Endothelial cell of umbilical vein (primary cell): ENCODE measurements at regions of chr9 and their contacts with region 1.

Region 1: DNA sequence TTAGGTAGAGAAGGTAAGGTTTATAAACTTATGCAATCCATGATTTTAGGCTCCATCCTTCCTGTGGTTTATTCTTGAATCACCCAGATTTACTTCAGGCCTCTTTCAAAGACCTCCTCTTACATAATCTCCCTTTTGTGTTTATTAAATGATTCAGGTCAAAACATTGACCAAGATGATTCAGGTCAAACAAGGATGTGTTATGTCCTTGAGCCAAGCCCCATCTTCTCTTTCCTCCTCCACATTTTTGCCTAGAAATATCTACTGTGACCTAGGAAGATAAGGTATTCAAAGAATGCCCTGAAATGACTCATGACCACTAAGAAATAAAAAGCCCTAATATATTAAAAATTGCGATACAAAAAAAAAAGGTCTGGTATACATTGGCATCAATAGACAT is 31.8 kb upstream of the TLR4 start:
- DNase-seq: no peak
- H3K4me3 ChIP-seq: no peak overlapping the region
- H3K27ac ChIP-seq: no peak overlapping the region
- H3K4me1 ChIP-seq: peaks cover 17% of the 10 kb centered on the region
- H3K27me3 ChIP-seq: no peaks in the 10 kb centered on the region
- CTCF ChIP-seq: no peak
- POLR2A ChIP-seq: no peak

Region 2: DNA sequence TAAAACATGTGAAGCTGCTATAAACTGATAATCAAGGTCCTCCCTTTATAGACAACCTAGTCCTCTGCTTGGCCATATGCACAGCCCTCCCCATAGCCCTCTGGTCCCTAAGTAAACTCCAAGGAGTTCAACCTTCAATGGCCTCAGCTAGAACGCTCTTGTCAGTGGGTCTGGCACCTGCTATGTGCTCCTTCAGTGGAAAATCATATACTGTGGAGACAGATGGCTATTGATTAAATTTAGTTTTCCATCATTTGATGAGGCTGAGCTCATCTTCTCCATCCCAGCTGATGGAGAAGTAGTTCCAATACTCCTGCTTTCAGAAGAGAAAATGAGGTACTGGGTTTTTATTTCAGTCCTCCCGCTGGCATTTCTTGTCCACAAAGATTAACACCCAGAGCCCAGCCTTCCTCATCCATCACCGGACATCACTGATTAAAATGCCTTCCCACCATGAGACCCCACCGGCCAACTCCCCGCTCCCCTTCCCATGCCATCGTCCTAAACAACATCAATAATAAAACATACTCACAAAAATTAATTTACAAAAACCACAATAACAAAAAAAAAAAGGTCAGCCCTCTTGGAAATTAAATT is 850.7 kb before region 1 on chr9:
- CTCF ChIA-PET with region 1: no interaction called
- POLR2A ChIA-PET with region 1: no interaction called
- dilution Hi-C with region 1: no loop called
- intact Hi-C with region 1: no loop called
- DNase-seq: no peak
- H3K4me3 ChIP-seq: no peak overlapping the region
- H3K27ac ChIP-seq: no peak overlapping the region
- H3K4me1 ChIP-seq: no peaks in the 10 kb centered on the region
- H3K27me3 ChIP-seq: no peaks in the 10 kb centered on the region
- CTCF ChIP-seq: no peak
- POLR2A ChIP-seq: no peak

Region 3: GRCh38 chr9:117564839-117565238 is 107.6 kb before region 1 on chr9:
- CTCF ChIA-PET with region 1: no interaction called
- POLR2A ChIA-PET with region 1: no interaction called
- dilution Hi-C with region 1: no loop called
- intact Hi-C with region 1: no loop called
- DNase-seq: no peak
- H3K4me3 ChIP-seq: no peak overlapping the region
- H3K27ac ChIP-seq: no peak overlapping the region
- H3K4me1 ChIP-seq: no peaks in the 10 kb centered on the region
- H3K27me3 ChIP-seq: no peaks in the 10 kb centered on the region
- CTCF ChIP-seq: no peak
- POLR2A ChIP-seq: no peak

Region 4: GRCh38 chr9:118522093-118523028 is 850.0 kb after region 1 on chr9:
- CTCF ChIA-PET with region 1: no interaction called
- POLR2A ChIA-PET with region 1: no interaction called
- dilution Hi-C with region 1: no loop called
- intact Hi-C with region 1: loop called (anchors 10 kb)
- DNase-seq: peak; percentile 79
- H3K4me3 ChIP-seq: no peak overlapping the region
- H3K27ac ChIP-seq: no peak overlapping the region
- H3K4me1 ChIP-seq: no peaks in the 10 kb centered on the region
- H3K27me3 ChIP-seq: peaks cover 0 to 2% of the 10 kb centered on the region in 2 experiments
- CTCF ChIP-seq: peak; percentile 72 to 89
- POLR2A ChIP-seq: no peak